GM12878 (cell line): ENCODE measurements at regions of chr6 and their contacts with region 1.

Region 1: DNA sequence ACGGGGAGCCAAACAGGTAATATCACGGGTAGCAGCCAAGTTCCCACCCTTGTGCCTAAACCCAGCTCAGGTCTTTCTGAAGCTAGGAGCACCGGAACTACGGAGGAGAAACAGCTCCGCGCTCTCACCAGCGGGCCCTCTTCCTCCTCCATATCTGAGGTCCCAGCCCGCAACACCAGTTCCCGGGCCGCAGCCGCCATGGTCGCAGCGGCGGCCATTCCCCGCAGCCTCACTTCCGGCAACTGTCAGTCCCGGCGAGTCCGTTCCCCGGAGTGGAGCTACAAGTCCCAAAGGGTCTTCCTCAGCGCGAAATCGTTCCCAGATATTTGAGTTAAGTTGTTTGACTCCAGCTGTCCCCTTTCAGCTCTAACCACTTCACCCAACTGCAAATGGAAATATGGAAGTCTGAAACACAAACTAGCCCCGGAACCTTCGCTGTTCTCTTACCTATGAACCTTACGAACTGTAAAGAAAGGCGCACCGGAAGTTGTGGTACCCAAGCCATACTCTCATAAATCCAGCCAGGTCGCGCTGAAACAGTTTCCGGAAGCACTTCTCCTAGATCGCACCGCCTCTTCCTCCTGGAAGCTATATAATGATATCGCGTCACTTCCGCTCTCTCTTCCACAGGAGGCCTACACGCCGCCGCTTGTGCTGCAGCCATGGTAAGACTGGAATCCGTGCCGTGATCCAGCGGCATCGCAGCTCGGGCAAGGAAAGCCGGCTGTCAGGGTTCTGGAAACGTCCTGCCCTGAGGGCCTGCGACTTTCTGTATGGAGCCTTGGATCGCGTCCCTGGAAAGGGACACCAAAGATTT is at the starts of genes RPS18 and VPS52:
- DNase-seq: peak; percentile 96
- ATAC-seq: peak; percentile 87
- H3K4me3 ChIP-seq: peak within 1 kb of the TSS; percentile 88
- H3K27ac ChIP-seq: peak within 1 kb of the TSS; percentile 97
- H3K4me1 ChIP-seq: peaks cover 18% of the 10 kb centered on the region
- H3K27me3 ChIP-seq: no peaks in the 10 kb centered on the region
- CTCF ChIP-seq: no peak
- EP300 ChIP-seq: peak in 1 of 2 experiments; percentile 52; a peak in 2 of 4 replicates
- POLR2A ChIP-seq: peak; percentile 100
- RAD21 ChIP-seq: no peak
- polyA plus RNA-seq, gene RPS18: 17,270 to 20,828 TPM
- polyA plus RNA-seq, gene VPS52: 11.3 to 13.2 TPM

Region 2: GRCh38 chr6:33344701-33345697 is 73.3 kb after region 1 on chr6:
- CTCF ChIA-PET with region 1: interaction called, 22 read pairs
- POLR2A ChIA-PET with region 1: interaction called, 4 read pairs
- RAD21 ChIA-PET with region 1: interaction called, 14 read pairs
- SMC1A ChIA-PET with region 1: interaction called, 8 read pairs
- in situ Hi-C with region 1: no loop called
- intact Hi-C with region 1: loop called (anchors 2 kb)
- DNase-seq: peak; percentile 58
- ATAC-seq: peak; percentile 81
- H3K4me3 ChIP-seq: peak overlapping the region; percentile 46; the same call in 1 of the 2 replicates
- H3K27ac ChIP-seq: peak overlapping the region; percentile 41
- H3K4me1 ChIP-seq: peaks cover 15% of the 10 kb centered on the region
- H3K27me3 ChIP-seq: no peaks in the 10 kb centered on the region
- CTCF ChIP-seq: peak; percentile 48 to 60 (median 55); a peak in 5 of 6 replicates
- EP300 ChIP-seq: no peak
- POLR2A ChIP-seq: no peak
- RAD21 ChIP-seq: peak; percentile 63

Region 3: GRCh38 chr6:33711140-33712129 is 439.8 kb after region 1 on chr6 and contains the start of gene UQCC2:
- CTCF ChIA-PET with region 1: no interaction called
- POLR2A ChIA-PET with region 1: no interaction called
- RAD21 ChIA-PET with region 1: no interaction called
- SMC1A ChIA-PET with region 1: no interaction called
- in situ Hi-C with region 1: no loop called
- intact Hi-C with region 1: no loop called
- DNase-seq: peak; percentile 84
- ATAC-seq: peak; percentile 97
- H3K4me3 ChIP-seq: peak within 1 kb of the TSS; percentile 83
- H3K27ac ChIP-seq: peak within 1 kb of the TSS; percentile 98
- H3K4me1 ChIP-seq: peaks cover 28% of the 10 kb centered on the region
- H3K27me3 ChIP-seq: no peaks in the 10 kb centered on the region
- CTCF ChIP-seq: peak; percentile 66 to 87 (median 68)
- EP300 ChIP-seq: no peak
- POLR2A ChIP-seq: peak; percentile 93
- RAD21 ChIP-seq: peak; percentile 64
- polyA plus RNA-seq, gene UQCC2: 433 to 478 TPM